GM10248 (cell line): ENCODE measurements at regions of chr9 and their contacts with region 1.

Region 1: GRCh38 chr9:72022841-72023240 is 37.6 kb downstream of the C9orf57 start:
- DNase-seq: no peak
- CTCF ChIP-seq: no peak

Region 2: DNA sequence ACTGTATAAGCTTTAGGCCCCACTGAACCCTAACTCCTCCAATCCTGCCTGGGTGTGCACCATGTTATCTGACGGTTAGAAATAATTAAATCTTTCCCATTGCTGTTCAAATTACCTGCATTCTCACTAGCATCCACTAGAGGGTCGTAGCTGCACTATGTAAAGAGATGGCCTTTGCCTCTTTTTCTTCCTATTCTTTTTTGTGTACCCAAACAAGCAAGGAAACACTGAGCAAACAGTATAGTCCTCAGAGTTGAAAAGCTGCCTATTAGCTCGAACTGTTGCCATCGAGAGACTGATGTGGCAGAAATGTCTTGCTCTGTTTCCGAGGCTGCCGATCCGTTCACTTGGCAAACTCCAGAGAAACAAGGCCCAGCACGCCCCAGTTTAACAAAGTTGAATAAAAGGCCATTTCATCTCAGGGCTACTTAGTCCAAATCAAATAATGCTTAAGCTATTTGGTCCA is 737.6 kb before region 1 on chr9:
- CTCF ChIA-PET with region 1: interaction called, 12 read pairs
- POLR2A ChIA-PET with region 1: no interaction called
- DNase-seq: peak; percentile 28
- CTCF ChIP-seq: peak; percentile 92

Region 3: GRCh38 chr9:71768388-71769174 is 254.3 kb before region 1 on chr9 and contains the start of gene CEMIP2:
- CTCF ChIA-PET with region 1: interaction called, 12 read pairs
- POLR2A ChIA-PET with region 1: no interaction called
- DNase-seq: peak; percentile 90
- CTCF ChIP-seq: peak; percentile 74

Region 4: GRCh38 chr9:71806901-71807307 is 215.9 kb before region 1 on chr9:
- CTCF ChIA-PET with region 1: interaction called, 178 read pairs
- POLR2A ChIA-PET with region 1: no interaction called
- DNase-seq: peak; percentile 62
- CTCF ChIP-seq: peak; percentile 84

Region 5: GRCh38 chr9:72006501-72006900 is 16.3 kb before region 1 on chr9:
- CTCF ChIA-PET with region 1: interaction called, 39 read pairs
- POLR2A ChIA-PET with region 1: no interaction called
- DNase-seq: no peak
- CTCF ChIP-seq: no peak

Region 6: GRCh38 chr9:72048850-72049249 is 26.0 kb after region 1 on chr9:
- CTCF ChIA-PET with region 1: interaction called, 10 read pairs
- POLR2A ChIA-PET with region 1: no interaction called
- DNase-seq: no peak
- CTCF ChIP-seq: no peak

Region 7: DNA sequence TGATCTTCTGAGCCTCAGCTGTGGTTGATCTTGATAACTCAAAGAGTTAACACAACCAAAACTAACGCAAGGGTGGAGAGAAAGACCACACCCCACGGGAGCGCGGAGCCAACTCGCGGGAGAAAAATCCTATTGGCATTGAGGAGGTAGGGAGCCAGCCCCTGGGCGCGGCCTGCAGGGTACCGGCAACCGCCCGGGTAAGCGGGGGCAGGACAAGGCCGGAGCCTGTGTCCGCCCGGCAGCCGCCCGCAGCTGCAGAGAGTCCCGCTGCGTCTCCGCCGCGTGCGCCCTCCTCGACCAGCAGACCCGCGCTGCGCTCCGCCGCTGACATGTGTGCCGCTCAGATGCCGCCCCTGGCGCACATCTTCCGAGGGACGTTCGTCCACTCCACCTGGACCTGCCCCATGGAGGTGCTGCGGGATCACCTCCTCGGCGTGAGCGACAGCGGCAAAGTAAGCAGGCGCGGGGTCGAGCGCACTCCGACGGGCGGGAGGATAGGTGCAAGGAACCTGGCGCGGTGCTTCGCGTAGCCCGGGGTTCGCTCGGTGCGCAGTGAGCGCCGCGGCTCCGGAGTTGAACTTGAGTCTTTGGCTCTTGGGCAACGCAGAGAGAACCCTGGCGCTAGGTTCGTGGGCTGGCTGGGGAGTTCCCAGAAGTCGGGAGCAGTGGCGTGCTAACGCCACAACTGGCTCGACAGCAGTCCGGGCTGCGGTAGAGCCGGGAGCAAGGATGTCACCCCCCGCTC is 126.6 kb after region 1 on chr9 and contains the start of gene GDA:
- CTCF ChIA-PET with region 1: no interaction called
- POLR2A ChIA-PET with region 1: no interaction called
- DNase-seq: peak; percentile 26
- CTCF ChIP-seq: no peak